ENCODE measurements at regions of chr14 and their contacts with region 1.

Region 1: DNA sequence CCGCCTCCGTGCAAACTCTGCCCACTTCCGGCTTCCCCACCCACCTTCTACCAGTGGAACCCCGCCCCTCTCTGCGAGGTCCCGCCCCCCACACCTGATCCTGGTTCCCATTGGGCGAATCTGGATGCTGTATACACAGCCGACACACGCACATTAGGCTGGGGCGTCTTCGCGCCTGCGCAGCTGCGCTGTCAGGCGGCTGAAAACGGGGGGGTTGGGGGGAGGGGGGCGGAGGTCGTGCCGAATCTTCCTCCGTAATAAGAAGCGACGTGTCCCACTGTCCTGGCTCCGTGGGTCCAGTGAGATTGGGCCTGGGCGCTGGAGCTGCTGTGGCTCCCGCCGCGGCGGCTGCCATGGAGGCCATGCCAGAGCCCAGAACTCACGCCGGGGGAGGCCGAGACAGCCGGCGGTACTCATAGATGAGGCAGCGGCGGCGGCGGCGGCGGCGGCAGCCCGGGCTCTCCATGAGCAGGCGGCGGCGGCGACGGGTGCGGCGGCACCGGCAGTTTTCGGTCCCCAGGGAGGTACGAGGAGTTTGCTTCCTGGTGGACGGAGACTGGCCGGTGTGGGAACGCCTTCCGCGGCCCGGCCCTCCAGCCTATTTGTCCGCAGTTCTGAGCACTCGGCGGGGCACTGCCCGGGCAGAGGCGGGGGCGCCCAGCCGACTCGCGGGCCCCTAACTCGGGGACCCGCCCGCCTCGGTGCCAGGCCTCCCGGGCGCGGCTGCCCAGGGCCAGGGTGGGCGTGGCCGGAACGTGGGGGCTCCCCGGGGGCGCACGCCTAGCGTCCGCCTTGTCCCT is 64.5 kb downstream of the KLHL28 start:
- DNase-seq: peak; percentile 98 to 99 (median 98)
- ATAC-seq: peak; percentile 97
- H3K4me3 ChIP-seq: peak overlapping the region; percentile 73 to 75
- H3K4me3 Mint-ChIP-seq: peak overlapping the region; percentile 93
- H3K27ac ChIP-seq: peak overlapping the region; percentile 86 to 92
- H3K27ac Mint-ChIP-seq: peak overlapping the region; percentile 98
- H3K4me1 ChIP-seq: peaks cover 17% of the 10 kb centered on the region
- H3K4me1 Mint-ChIP-seq: peaks cover 25% of the 10 kb centered on the region
- H3K27me3 ChIP-seq: no peaks in the 10 kb centered on the region
- H3K27me3 Mint-ChIP-seq: no peaks in the 10 kb centered on the region
- CTCF ChIP-seq: no peak

Region 2: DNA sequence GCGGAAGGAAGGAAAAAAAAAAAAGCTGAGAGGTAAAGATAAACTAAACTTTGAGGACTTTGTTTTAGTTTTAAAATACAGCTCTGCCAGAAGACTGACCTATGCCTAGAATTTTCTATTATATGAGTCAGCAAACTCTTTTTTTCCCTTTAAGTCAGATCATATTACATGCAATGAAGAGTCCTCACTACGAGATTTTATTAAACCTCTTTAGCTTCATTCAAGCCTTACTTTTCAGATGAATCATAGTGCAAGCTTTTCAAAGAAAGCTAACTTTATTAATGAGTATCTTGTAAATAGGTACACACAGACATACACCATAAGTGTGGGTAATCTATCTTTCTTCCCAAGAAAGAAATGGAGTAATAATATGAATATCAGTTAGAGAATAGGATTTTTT is 332.3 kb before region 1 on chr14:
- CTCF ChIA-PET with region 1: no interaction called
- POLR2A ChIA-PET with region 1: no interaction called
- intact Hi-C with region 1: no loop called
- DNase-seq: no peak
- ATAC-seq: no peak
- H3K4me3 ChIP-seq: no peak overlapping the region
- H3K4me3 Mint-ChIP-seq: no peak overlapping the region
- H3K27ac ChIP-seq: no peak overlapping the region
- H3K27ac Mint-ChIP-seq: no peak overlapping the region
- H3K4me1 ChIP-seq: no peaks in the 10 kb centered on the region
- H3K4me1 Mint-ChIP-seq: no peaks in the 10 kb centered on the region
- H3K27me3 ChIP-seq: no peaks in the 10 kb centered on the region
- H3K27me3 Mint-ChIP-seq: no peaks in the 10 kb centered on the region
- CTCF ChIP-seq: no peak

Region 3: GRCh38 chr14:44854114-44854513 is 43.1 kb before region 1 on chr14:
- CTCF ChIA-PET with region 1: no interaction called
- POLR2A ChIA-PET with region 1: no interaction called
- intact Hi-C with region 1: no loop called
- DNase-seq: peak in 3 of 9 experiments; percentile 5 to 9 (median 6)
- ATAC-seq: no peak
- H3K4me3 ChIP-seq: no peak overlapping the region
- H3K4me3 Mint-ChIP-seq: no peak overlapping the region
- H3K27ac ChIP-seq: no peak overlapping the region
- H3K27ac Mint-ChIP-seq: no peak overlapping the region
- H3K4me1 ChIP-seq: no peaks in the 10 kb centered on the region
- H3K4me1 Mint-ChIP-seq: no peaks in the 10 kb centered on the region
- H3K27me3 ChIP-seq: peaks cover 0 to 3% of the 10 kb centered on the region in 2 experiments
- H3K27me3 Mint-ChIP-seq: peaks cover 37% of the 10 kb centered on the region
- CTCF ChIP-seq: no peak

Region 4: GRCh38 chr14:44935155-44935554 is 37.9 kb after region 1 on chr14:
- CTCF ChIA-PET with region 1: no interaction called
- POLR2A ChIA-PET with region 1: no interaction called
- intact Hi-C with region 1: loop called in 1 of 2 experiments (anchors 2 kb)
- DNase-seq: no peak
- ATAC-seq: no peak
- H3K4me3 ChIP-seq: no peak overlapping the region
- H3K4me3 Mint-ChIP-seq: no peak overlapping the region
- H3K27ac ChIP-seq: no peak overlapping the region
- H3K27ac Mint-ChIP-seq: no peak overlapping the region
- H3K4me1 ChIP-seq: no peaks in the 10 kb centered on the region
- H3K4me1 Mint-ChIP-seq: peaks cover 56% of the 10 kb centered on the region
- H3K27me3 ChIP-seq: no peaks in the 10 kb centered on the region
- H3K27me3 Mint-ChIP-seq: no peaks in the 10 kb centered on the region
- CTCF ChIP-seq: no peak

Region 5: GRCh38 chr14:45083971-45084722 is 186.9 kb after region 1 on chr14 and contains the start of gene PRPF39:
- CTCF ChIA-PET with region 1: no interaction called
- POLR2A ChIA-PET with region 1: no interaction called
- intact Hi-C with region 1: loop called (anchors 1 to 2 kb)
- DNase-seq: peak; percentile 89 to 98 (median 94)
- ATAC-seq: peak; percentile 91
- H3K4me3 ChIP-seq: peak within 1 kb of the TSS; percentile 78 to 93
- H3K4me3 Mint-ChIP-seq: peak within 1 kb of the TSS; percentile 94
- H3K27ac ChIP-seq: peak within 1 kb of the TSS; percentile 82 to 84
- H3K27ac Mint-ChIP-seq: peak within 1 kb of the TSS; percentile 95
- H3K4me1 ChIP-seq: peaks cover 47% of the 10 kb centered on the region
- H3K4me1 Mint-ChIP-seq: peaks cover 55% of the 10 kb centered on the region
- H3K27me3 ChIP-seq: no peaks in the 10 kb centered on the region
- H3K27me3 Mint-ChIP-seq: no peaks in the 10 kb centered on the region
- CTCF ChIP-seq: no peak
- total RNA-seq, gene PRPF39: 64.5 to 64.7 TPM

Region 6: GRCh38 chr14:45134051-45134958 is 237.1 kb after region 1 on chr14 and contains the start of gene FKBP3:
- CTCF ChIA-PET with region 1: interaction called, 5 read pairs
- POLR2A ChIA-PET with region 1: interaction called, 4 read pairs
- intact Hi-C with region 1: loop called (anchors 1 to 5 kb)
- DNase-seq: peak; percentile 90 to 99 (median 95)
- ATAC-seq: peak; percentile 91
- H3K4me3 ChIP-seq: peak within 1 kb of the TSS; percentile 84 to 98
- H3K4me3 Mint-ChIP-seq: peak within 1 kb of the TSS; percentile 97
- H3K27ac ChIP-seq: peak within 1 kb of the TSS; percentile 84 to 92
- H3K27ac Mint-ChIP-seq: peak within 1 kb of the TSS; percentile 98
- H3K4me1 ChIP-seq: peaks cover 31% of the 10 kb centered on the region
- H3K4me1 Mint-ChIP-seq: peaks cover 48% of the 10 kb centered on the region
- H3K27me3 ChIP-seq: no peaks in the 10 kb centered on the region
- H3K27me3 Mint-ChIP-seq: no peaks in the 10 kb centered on the region
- CTCF ChIP-seq: no peak
- total RNA-seq, gene FKBP3: 32.1 to 32.3 TPM

Region 7: DNA sequence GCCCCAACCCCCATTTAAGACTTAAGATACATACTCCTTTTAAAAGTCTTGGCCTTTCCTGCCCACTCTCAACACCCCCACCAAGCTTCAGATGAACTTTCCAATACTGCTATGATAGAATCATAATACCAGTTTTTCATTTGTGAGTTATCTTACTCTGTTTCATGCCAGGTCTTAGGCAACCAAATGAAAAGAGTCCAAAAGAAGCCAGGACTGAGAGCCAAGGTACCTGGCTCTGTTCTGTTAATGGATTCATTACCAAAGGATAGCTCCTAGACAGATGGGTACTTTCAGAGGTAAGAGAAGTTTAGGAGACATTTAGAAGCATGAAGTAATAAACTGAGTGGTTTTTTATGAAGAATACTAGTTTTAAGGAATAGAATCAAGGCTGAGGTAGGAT is 272.7 kb after region 1 on chr14:
- CTCF ChIA-PET with region 1: no interaction called
- POLR2A ChIA-PET with region 1: no interaction called
- intact Hi-C with region 1: no loop called
- DNase-seq: no peak
- ATAC-seq: no peak
- H3K4me3 ChIP-seq: no peak overlapping the region
- H3K4me3 Mint-ChIP-seq: no peak overlapping the region
- H3K27ac ChIP-seq: no peak overlapping the region
- H3K27ac Mint-ChIP-seq: no peak overlapping the region
- H3K4me1 ChIP-seq: no peaks in the 10 kb centered on the region
- H3K4me1 Mint-ChIP-seq: no peaks in the 10 kb centered on the region
- H3K27me3 ChIP-seq: no peaks in the 10 kb centered on the region
- H3K27me3 Mint-ChIP-seq: no peaks in the 10 kb centered on the region
- CTCF ChIP-seq: no peak

Region 8: DNA sequence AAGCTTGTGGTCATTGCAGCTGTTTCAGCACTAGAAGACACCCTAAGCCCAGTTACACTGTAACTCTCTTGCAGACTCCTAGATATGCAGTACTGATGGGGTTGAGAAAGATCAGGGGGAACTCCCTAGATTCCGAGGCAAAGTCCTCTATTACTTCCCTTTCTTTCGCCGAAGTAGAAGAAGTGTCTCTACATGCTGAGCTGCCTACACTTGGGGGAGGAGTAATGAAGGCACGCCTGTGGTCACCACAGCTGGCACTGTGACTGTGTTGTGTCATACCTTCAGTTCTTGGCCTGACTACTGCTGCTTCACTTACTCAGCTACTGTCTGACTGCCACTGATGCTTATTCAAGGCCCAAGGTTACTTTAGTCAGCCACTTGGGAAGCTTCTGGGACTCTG is 1789.4 kb after region 1 on chr14:
- CTCF ChIA-PET with region 1: no interaction called
- POLR2A ChIA-PET with region 1: no interaction called
- intact Hi-C with region 1: no loop called
- DNase-seq: no peak
- ATAC-seq: no peak
- H3K4me3 ChIP-seq: no peak overlapping the region
- H3K4me3 Mint-ChIP-seq: no peak overlapping the region
- H3K27ac ChIP-seq: no peak overlapping the region
- H3K27ac Mint-ChIP-seq: no peak overlapping the region
- H3K4me1 ChIP-seq: no peaks in the 10 kb centered on the region
- H3K4me1 Mint-ChIP-seq: no peaks in the 10 kb centered on the region
- H3K27me3 ChIP-seq: no peaks in the 10 kb centered on the region
- H3K27me3 Mint-ChIP-seq: no peaks in the 10 kb centered on the region
- CTCF ChIP-seq: no peak

Measured in CD8-positive, alpha-beta T cell (primary cell).